Activated B cell treated with CpG ODN at 0.5 μM for 24 hours (primary cell): ENCODE measurements at regions of chr6 and their contacts with region 1.

Region 1: GRCh38 chr6:45930420-45931040 is 85.1 kb downstream of the CLIC5 start:
- DNase-seq: peak; percentile 25
- ATAC-seq: peak; percentile 45
- H3K4me3 Mint-ChIP-seq: no peak overlapping the region
- H3K27ac Mint-ChIP-seq: no peak overlapping the region
- H3K4me1 Mint-ChIP-seq: no peaks in the 10 kb centered on the region
- H3K27me3 Mint-ChIP-seq: peaks cover 2% of the 10 kb centered on the region
- CTCF ChIP-seq: peak; percentile 99

Region 2: GRCh38 chr6:44655412-44656342 is 1274.9 kb before region 1 on chr6:
- CTCF ChIA-PET with region 1: interaction called, 176 read pairs
- POLR2A ChIA-PET with region 1: no interaction called
- intact Hi-C with region 1: no loop called
- DNase-seq: peak; percentile 65
- ATAC-seq: peak; percentile 56
- H3K4me3 Mint-ChIP-seq: no peak overlapping the region
- H3K27ac Mint-ChIP-seq: no peak overlapping the region
- H3K4me1 Mint-ChIP-seq: peaks cover 2% of the 10 kb centered on the region
- H3K27me3 Mint-ChIP-seq: peaks cover 24% of the 10 kb centered on the region
- CTCF ChIP-seq: peak; percentile 71

Region 3: DNA sequence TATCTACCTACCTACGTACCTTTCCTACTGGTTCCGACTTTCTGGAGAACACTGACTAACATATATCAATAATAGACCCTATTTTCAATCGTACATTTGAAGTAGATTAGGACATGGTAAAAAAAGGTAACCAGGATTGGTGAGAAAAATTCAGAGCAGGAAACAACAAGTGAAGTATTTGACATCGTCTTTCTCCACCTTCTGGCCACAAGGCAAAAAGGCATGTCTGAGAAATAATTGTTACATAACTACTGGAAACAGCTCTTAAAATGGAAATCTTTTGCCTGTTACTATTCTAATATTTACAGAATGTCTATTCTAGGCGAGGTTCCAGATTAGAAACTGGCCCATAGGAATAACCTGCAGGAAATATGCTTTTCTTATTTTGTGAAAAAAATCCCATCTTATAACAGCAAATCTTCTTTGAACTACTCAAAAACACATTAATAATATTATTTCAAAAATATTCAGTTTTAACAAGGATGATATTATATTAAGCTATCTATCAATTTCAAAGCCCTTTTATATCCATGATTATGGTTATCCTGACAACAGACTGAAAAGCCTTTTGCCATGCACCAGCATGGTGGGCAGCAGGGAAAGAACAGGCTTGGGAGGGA is 479.9 kb after region 1 on chr6:
- CTCF ChIA-PET with region 1: interaction called, 27 read pairs
- POLR2A ChIA-PET with region 1: no interaction called
- intact Hi-C with region 1: loop called (anchors 1 kb)
- DNase-seq: no peak
- ATAC-seq: peak; percentile 47
- H3K4me3 Mint-ChIP-seq: no peak overlapping the region
- H3K27ac Mint-ChIP-seq: no peak overlapping the region
- H3K4me1 Mint-ChIP-seq: no peaks in the 10 kb centered on the region
- H3K27me3 Mint-ChIP-seq: no peaks in the 10 kb centered on the region
- CTCF ChIP-seq: peak; percentile 44

Region 4: DNA sequence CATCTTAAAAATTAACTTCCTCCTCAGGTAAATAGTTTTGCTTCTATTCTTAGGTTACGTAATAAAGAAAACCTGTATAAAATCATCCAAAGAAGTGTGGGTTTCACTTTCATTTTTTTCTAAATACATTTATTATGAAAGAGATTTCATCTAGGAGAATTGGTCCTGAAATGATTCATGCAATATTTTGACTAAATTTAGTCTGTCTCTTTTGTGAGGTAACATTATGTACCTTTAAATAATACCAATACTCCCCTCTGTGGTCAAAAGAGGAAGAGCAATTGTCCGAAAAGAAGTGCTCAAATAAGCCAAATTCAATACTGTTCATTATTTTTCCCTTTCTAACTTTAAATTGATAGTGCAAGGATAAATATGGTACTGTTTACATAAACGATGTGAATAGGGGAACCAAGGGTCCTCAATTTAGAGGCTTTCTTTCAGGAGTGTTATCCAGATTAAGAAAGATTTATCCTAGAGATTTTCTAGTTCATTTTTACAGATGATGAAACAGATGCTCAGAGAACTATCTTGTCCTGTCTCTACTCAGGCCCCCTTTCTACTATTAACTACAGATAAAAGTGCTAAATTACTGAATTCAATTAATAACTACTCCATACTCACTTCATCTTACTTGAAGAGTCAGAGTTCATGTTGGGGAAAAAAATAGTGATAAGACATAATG is 695.8 kb after region 1 on chr6:
- CTCF ChIA-PET with region 1: no interaction called
- POLR2A ChIA-PET with region 1: no interaction called
- intact Hi-C with region 1: loop called (anchors 1 kb)
- DNase-seq: no peak
- ATAC-seq: peak; percentile 54
- H3K4me3 Mint-ChIP-seq: no peak overlapping the region
- H3K27ac Mint-ChIP-seq: no peak overlapping the region
- H3K4me1 Mint-ChIP-seq: peaks cover 7% of the 10 kb centered on the region
- H3K27me3 Mint-ChIP-seq: peaks cover 4% of the 10 kb centered on the region
- CTCF ChIP-seq: no peak